ENCODE measurements at regions of chr5 and their contacts with region 1.

Region 1: GRCh38 chr5:36305571-36306326 is 4.0 kb upstream of the RANBP3L start:
- DNase-seq: peak; percentile 55 to 82 (median 68)
- ATAC-seq: peak; percentile 73 to 74
- H3K4me3 ChIP-seq: no peak overlapping the region
- H3K27ac ChIP-seq: no peak overlapping the region
- H3K4me1 ChIP-seq: no peaks in the 10 kb centered on the region
- H3K27me3 ChIP-seq: no peaks in the 10 kb centered on the region

Region 2: DNA sequence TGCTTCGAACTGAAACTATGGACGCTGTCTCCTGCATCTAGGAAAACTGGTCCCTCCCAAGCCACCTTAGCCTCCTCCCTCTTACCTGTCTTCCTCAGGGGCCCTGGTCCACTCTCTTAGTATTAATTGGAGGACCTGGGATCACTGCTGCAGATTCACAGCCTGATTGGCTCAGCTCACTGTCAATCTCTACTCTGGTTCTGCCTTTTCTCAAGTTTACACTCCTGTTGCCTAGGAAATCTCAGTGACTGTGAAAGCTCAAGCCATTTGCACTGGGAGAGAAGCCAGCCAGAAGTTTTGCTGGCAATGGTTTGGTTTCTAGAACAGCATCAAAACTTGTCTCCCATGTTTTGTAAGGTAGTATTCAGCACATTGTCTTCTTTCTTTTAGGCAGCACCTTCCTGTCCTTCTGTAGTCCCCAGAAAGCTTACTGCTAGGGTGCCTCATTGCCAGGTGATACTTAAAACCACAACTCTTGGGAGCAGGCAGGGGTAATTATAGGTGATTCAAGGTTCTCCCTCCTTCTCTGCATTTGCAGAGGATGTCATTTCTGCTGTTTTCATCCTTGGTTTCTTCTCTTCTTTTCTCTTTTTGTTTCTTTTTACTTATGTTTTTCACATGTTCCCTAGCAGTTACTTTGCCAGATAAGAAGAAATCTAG is 367.1 kb before region 1 on chr5 and contains the start of gene CAPSL:
- intact Hi-C with region 1: no loop called
- DNase-seq: peak in 1 of 3 donors; percentile 45
- ATAC-seq: peak in 1 of 2 donors; percentile 55
- H3K4me3 ChIP-seq: no peak within 1 kb of the TSS
- H3K27ac ChIP-seq: no peak within 1 kb of the TSS
- H3K4me1 ChIP-seq: no peaks in the 10 kb centered on the region
- H3K27me3 ChIP-seq: no peaks in the 10 kb centered on the region
- total RNA-seq, gene CAPSL: not detected

Region 3: DNA sequence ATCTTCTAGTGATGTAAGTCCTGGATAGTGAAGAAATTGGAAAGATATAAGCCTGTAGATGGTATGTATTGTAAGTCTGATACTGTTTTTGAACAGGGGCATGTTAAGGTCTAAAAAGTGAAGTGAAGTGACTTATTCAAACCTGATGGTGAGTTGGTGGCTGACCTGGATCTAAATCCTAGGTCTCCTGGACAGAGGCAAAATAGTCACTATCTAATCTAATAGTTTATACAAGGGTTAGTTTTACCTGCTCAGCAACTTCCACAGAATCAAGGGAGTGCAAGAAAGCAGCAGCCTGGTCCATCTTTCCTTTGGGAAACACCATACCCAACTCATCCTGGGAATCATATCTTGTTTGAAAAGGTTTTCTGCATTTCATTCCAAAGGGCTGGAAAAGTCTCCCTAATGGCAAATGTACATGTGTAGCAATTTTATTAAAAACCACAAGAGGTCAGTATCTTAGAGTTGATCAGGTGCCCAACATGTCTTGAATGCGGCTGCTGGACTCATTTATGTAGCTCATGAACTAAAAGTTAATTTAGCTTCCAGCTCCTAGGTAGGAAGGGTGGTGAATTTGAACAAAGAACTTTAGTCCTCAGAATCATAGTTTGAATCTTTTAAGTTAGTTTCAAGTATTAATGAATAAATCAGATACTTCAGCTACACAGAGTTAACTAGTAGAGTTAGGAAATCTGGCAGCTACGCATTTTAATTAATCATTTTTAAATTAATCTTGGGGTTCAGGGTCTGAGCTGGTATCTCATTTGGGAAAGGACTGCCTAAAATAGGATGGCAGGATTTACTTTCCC is 127.8 kb before region 1 on chr5:
- intact Hi-C with region 1: loop called in 2 of 4 experiments (anchors 10 kb)
- DNase-seq: no peak
- ATAC-seq: peak; percentile 55 to 56
- H3K4me3 ChIP-seq: no peak overlapping the region
- H3K27ac ChIP-seq: no peak overlapping the region
- H3K4me1 ChIP-seq: no peaks in the 10 kb centered on the region
- H3K27me3 ChIP-seq: no peaks in the 10 kb centered on the region

Region 4: DNA sequence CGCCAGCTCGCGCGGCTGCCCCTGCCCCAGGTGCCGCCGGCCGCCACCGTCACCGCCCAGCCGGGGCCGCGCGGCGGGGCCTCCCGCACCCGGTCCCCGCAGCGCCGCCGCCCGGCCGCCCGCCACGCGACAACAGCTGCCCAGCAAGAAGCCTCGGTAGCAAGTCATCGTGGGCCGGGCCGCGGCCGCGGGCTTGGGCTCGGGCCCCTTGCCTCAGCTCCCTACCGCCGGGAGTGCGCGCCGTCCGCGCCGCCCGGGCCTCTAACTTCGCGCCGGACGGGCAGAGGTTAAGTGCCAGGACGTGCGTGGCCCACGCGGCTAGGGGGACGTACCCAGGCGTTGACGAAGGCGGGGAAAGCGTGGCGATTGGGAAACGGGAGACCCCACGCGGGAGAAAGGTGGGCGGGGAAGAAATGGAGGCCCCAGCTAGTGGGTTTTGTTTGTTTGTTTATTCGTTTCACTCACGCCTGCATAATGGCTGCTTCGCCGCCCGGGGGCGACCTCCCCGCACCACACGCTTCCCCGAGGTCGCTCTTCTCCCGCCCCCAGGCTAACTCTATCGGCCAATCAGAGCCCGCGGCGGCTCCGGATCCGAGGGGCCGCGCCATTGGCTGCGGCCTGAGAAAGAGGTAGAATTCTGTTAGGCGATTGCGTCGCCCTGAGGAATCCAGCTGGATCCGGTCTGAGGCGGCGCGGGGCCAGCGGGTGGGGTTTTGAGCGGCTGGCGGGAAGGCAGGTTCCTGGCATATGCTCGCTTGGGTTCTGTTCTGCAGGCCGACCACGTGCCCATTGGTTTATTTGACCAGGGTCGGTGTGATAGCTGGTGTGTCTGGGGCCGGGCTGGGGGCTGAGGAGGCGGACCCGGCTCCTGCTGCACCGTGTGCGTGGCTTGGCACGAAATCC is 63.9 kb before region 1 on chr5 and contains the start of gene NADK2:
- intact Hi-C with region 1: loop called in 2 of 4 experiments (anchors 10 kb)
- DNase-seq: peak; percentile 98
- ATAC-seq: peak; percentile 96 to 97
- H3K4me3 ChIP-seq: peak within 1 kb of the TSS; percentile 84
- H3K27ac ChIP-seq: peak within 1 kb of the TSS; percentile 69
- H3K4me1 ChIP-seq: peaks cover 4% of the 10 kb centered on the region
- H3K27me3 ChIP-seq: no peaks in the 10 kb centered on the region
- total RNA-seq, gene NADK2: 31.2 to 34.9 (median 32.6) TPM

Region 5: DNA sequence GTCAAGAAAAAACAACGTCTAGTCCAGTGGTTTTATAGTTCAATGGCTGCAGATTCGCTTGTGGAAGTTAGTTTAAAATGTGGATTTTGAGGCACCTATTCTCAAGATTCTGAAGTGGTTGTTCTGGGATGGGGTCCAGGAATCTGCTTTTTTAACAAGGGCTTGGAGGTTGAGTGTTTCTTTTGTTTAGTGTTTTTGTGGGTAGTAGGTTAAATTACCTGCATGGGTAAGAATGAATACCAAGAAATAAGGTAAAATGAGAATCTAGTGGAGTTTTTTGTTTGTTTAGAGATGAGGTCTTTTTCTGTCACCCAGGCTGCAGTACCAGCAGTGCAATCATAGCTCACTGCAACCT is 35.6 kb before region 1 on chr5:
- intact Hi-C with region 1: loop called (anchors 2 to 5 kb)
- DNase-seq: no peak
- ATAC-seq: no peak
- H3K4me3 ChIP-seq: no peak overlapping the region
- H3K27ac ChIP-seq: peak overlapping the region; percentile 27
- H3K4me1 ChIP-seq: no peaks in the 10 kb centered on the region
- H3K27me3 ChIP-seq: no peaks in the 10 kb centered on the region

Region 6: DNA sequence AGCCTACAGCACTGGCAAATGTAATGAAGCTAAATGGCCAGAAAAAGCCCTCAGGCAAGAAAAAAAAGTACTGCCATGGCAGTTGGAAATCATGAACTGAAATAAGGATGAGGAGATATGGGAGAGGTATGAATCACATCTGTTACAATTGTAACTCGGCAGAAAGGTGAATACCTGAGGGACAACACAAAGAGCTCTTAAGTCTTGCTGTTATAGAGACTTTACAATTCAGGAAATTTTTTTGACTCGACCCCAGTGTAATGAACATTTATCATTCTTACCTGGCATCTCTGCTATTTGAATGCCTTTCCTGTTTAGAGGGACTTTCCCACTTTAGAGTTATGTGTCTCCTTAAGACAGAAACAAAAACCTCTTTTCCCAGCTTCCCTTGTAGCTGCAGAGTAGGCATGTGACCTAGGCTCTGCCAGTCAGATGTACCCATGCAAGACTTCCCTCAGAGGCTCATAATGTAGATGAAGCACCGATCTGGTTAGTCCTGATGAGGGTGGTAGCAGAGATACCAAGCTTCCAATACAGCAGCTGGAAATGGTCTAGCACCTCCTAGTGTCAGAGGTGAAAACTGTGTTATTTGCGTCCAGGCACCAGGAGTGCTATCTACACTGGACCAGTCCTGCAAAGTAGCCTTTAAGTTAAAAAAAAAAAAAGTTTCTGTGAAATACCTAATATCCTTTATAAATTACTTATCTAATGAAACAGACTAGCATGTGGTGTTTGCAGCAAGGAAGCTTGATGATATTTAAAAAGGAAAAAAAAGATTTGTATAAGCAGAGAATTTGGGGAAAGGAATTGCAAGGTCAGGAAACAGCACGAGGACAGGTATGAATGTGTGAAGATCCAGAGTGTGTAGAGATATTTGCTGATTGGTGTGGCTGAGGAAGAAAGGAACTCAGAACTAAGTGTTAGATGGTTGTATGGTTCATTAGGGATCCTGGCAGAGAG is 153.7 kb after region 1 on chr5:
- intact Hi-C with region 1: no loop called
- DNase-seq: no peak
- ATAC-seq: no peak
- H3K4me3 ChIP-seq: no peak overlapping the region
- H3K27ac ChIP-seq: no peak overlapping the region
- H3K4me1 ChIP-seq: no peaks in the 10 kb centered on the region
- H3K27me3 ChIP-seq: no peaks in the 10 kb centered on the region